ENCODE measurements at regions of chr1 and their contacts with region 1.

Region 1: GRCh38 chr1:160519642-160520435 is 3.2 kb downstream of the SLAMF6 start:
- DNase-seq: peak; percentile 83
- H3K4me3 ChIP-seq: peak overlapping the region; percentile 83
- H3K27ac ChIP-seq: peak overlapping the region; percentile 98
- H3K4me1 ChIP-seq: peaks cover 71% of the 10 kb centered on the region
- CTCF ChIP-seq: peak; percentile 72

Region 2: GRCh38 chr1:160428655-160429054 is 91.2 kb before region 1 on chr1:
- CTCF ChIA-PET with region 1: interaction called, 4 read pairs
- POLR2A ChIA-PET with region 1: interaction called, 4 read pairs
- intact Hi-C with region 1: loop called (anchors 1 kb)
- DNase-seq: peak; percentile 81
- H3K4me3 ChIP-seq: peak overlapping the region; percentile 24
- H3K27ac ChIP-seq: peak overlapping the region; percentile 87
- H3K4me1 ChIP-seq: peaks cover 52% of the 10 kb centered on the region
- CTCF ChIP-seq: peak; percentile 99

Region 3: GRCh38 chr1:160539990-160540858 is 20.4 kb after region 1 on chr1:
- CTCF ChIA-PET with region 1: interaction called, 6 read pairs
- POLR2A ChIA-PET with region 1: interaction called, 24 read pairs
- intact Hi-C with region 1: loop called (anchors 1 kb)
- DNase-seq: peak; percentile 85
- H3K4me3 ChIP-seq: peak overlapping the region; percentile 35
- H3K27ac ChIP-seq: peak overlapping the region; percentile 85
- H3K4me1 ChIP-seq: peaks cover 58% of the 10 kb centered on the region
- CTCF ChIP-seq: no peak

Region 4: GRCh38 chr1:160607011-160607671 is 87.3 kb after region 1 on chr1:
- CTCF ChIA-PET with region 1: no interaction called
- POLR2A ChIA-PET with region 1: interaction called, 5 read pairs
- intact Hi-C with region 1: loop called (anchors 1 kb)
- DNase-seq: peak; percentile 93
- H3K4me3 ChIP-seq: no peak overlapping the region
- H3K27ac ChIP-seq: peak overlapping the region; percentile 55
- H3K4me1 ChIP-seq: peaks cover 60% of the 10 kb centered on the region
- CTCF ChIP-seq: peak; percentile 98

Region 5: DNA sequence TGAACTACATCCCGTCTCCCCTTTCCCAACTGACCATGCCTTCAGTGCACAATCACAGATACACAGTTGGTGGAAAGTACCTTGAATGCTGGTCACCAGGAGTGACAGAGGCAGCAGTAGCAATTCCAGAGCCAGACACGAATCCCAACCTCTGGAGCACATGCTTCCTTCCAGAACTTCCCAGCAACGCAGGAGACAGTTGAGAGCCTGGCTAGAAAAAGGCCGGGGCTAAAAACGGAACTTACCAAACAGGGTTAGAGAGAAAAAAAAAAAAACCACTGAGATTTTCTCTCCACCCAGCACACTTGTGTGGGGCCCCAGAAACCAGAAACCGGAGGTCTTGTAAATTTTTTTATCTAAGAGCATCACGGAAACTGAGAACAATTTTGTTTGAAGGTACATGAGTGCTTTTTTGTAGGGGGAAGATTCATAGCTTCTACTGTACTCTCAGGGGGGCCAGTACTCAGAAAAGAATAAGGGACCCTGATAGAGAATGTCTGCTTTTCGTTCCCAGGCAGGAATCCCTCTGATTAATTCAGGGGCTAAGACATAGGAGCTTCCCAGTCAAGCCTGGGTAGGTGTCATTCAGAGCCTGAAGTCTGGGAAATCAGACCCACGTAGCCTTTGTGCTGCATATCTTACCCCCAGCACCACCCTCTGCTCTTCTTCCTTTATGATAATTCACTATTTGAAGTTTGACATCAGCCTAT is 191.9 kb after region 1 on chr1 and contains the start of gene CD48:
- CTCF ChIA-PET with region 1: no interaction called
- POLR2A ChIA-PET with region 1: interaction called, 3 read pairs
- intact Hi-C with region 1: loop called (anchors 2 kb)
- DNase-seq: peak; percentile 88
- H3K4me3 ChIP-seq: peak within 1 kb of the TSS; percentile 77
- H3K27ac ChIP-seq: peak within 1 kb of the TSS; percentile 98
- H3K4me1 ChIP-seq: peaks cover 61% of the 10 kb centered on the region
- CTCF ChIP-seq: no peak
- total RNA-seq, gene CD48: 131 and 150 TPM in 2 replicates

Measured in OCI-LY7 (cell line).